Prostate gland (tissue), 2 donors: ENCODE measurements at regions of chr12 and their contacts with region 1.

Region 1: DNA sequence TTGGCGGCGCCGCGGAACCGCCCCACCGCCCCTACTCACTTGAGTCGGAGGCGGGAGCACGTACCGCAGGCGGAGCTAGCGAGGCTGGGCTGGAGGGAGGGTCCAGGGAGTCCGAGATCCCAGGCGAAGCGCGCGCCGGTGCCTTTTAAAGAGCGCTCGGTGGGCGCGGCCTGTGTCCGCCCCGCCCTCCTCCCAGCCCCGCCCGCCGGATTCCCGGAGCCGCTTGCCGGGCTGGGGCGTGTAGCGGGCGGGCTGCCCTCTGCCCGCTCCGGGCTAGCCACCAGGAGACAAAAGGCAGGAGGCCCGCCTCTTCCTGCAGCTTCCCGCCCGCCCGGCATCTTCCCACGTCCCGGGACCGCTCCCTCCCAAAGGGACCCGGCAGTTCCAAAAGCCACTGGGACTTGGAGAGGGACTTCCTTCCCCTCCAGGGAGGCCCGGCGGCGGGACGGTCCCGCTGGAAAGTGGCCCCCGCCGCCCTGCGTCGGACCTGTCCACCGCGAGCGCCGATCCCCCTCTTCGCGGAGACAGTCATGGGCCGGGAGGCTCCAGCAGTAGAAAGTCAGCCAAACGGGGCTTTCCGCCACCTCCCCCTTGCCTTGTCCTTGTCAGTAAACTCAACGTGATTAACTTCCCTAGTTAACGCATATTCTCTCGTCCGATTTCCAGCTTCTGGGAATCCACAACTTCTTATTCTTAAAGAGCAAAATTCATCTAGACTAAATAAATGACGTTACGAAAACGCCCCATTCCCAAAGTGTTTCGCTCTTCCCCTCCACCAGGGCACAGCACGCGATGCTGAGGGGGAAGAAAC is at the start of gene CSRP2:
- DNase-seq: peak; percentile 91
- H3K4me3 ChIP-seq: peak within 1 kb of the TSS; percentile 61 to 70
- H3K27ac ChIP-seq: peak within 1 kb of the TSS; percentile 80 to 91
- H3K4me1 ChIP-seq: peaks cover 7% of the 10 kb centered on the region
- H3K27me3 ChIP-seq: no peaks in the 10 kb centered on the region
- CTCF ChIP-seq: peak in 3 of 4 experiments; percentile 17 to 30 (median 17)
- POLR2A ChIP-seq: peak; percentile 92
- total RNA-seq, gene CSRP2: 31.0 to 98.6 TPM

Region 2: GRCh38 chr12:76820888-76821482 is 58.1 kb before region 1 on chr12:
- intact Hi-C with region 1: loop called (anchors 5 kb)
- DNase-seq: peak; percentile 10
- H3K4me3 ChIP-seq: no peak overlapping the region
- H3K27ac ChIP-seq: no peak overlapping the region
- H3K4me1 ChIP-seq: no peaks in the 10 kb centered on the region
- H3K27me3 ChIP-seq: no peaks in the 10 kb centered on the region
- CTCF ChIP-seq: peak in 3 of 4 experiments; percentile 28 to 42 (median 35)
- POLR2A ChIP-seq: no peak

Region 3: GRCh38 chr12:77299910-77300669 is 421.0 kb after region 1 on chr12:
- intact Hi-C with region 1: no loop called
- DNase-seq: no peak
- H3K4me3 ChIP-seq: no peak overlapping the region
- H3K27ac ChIP-seq: no peak overlapping the region
- H3K4me1 ChIP-seq: no peaks in the 10 kb centered on the region
- H3K27me3 ChIP-seq: no peaks in the 10 kb centered on the region
- CTCF ChIP-seq: no peak
- POLR2A ChIP-seq: no peak